ENCODE measurements at regions of chr19 and their contacts with region 1.

Region 1: GRCh38 chr19:38647368-38647965 is at the start of gene ACTN4:
- DNase-seq: peak; percentile 98
- H3K4me3 ChIP-seq: peak within 1 kb of the TSS; percentile 93 to 99
- H3K27ac ChIP-seq: peak within 1 kb of the TSS; percentile 94 to 95
- H3K4me1 ChIP-seq: peaks cover 11% of the 10 kb centered on the region
- H3K27me3 ChIP-seq: no peaks in the 10 kb centered on the region
- CTCF ChIP-seq: peak in 1 of 4 experiments; percentile 30
- POLR2A ChIP-seq: peak; percentile 100
- total RNA-seq, gene ACTN4: 312 to 330 TPM

Region 2: DNA sequence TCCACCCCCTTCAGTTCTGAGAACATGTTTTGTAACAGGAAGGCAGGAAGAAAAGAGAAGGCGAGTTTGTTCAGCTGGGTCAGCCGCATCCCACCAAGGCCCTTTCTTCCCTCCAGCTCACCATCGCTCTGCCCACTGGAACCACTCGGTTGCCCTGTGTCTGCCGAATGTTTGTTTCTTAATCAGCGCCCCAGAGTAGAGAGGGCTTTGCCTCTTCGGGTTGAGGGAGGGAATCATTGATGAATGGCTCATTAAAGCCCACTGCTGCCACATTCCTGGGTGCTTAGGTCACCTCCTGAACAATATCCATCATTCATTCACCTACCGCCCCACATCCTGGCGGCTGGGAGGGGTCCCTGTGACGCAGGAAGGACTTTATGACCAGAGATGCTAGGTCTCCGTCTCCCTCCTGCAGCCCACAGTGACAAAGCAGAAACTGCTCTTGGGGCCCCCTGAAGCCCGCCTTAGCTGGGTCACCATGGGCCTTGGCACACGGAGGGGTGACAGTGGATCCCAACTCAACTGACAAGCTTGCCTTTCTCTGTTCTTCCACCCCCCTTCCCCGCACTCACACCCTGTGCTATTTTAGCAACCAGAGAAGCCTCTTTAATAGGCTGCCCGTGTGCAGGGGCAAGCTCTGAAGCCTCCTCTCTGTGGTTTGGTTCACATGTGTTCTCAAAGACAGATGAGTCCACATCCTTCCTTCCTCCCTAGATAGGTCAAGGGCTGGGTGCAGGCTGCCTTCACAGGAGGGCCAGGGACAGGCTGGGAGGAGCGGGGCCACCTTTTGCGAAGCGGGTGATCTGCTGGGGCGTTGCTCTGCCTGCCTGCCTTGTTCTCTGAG is 46.1 kb after region 1 on chr19:
- intact Hi-C with region 1: loop called (anchors 5 kb)
- DNase-seq: no peak
- H3K4me3 ChIP-seq: no peak overlapping the region
- H3K27ac ChIP-seq: peak overlapping the region; percentile 72 to 74
- H3K4me1 ChIP-seq: no peaks in the 10 kb centered on the region
- H3K27me3 ChIP-seq: no peaks in the 10 kb centered on the region
- CTCF ChIP-seq: no peak
- POLR2A ChIP-seq: no peak

Region 3: GRCh38 chr19:38711726-38712153 is 64.3 kb after region 1 on chr19:
- intact Hi-C with region 1: loop called (anchors 5 kb)
- DNase-seq: peak; percentile 56
- H3K4me3 ChIP-seq: no peak overlapping the region
- H3K27ac ChIP-seq: peak overlapping the region; percentile 74 to 77
- H3K4me1 ChIP-seq: peaks cover 42% of the 10 kb centered on the region
- H3K27me3 ChIP-seq: no peaks in the 10 kb centered on the region
- CTCF ChIP-seq: peak in 1 of 4 experiments; percentile 13
- POLR2A ChIP-seq: no peak

Region 4: GRCh38 chr19:38831142-38831605 is 183.7 kb after region 1 on chr19:
- intact Hi-C with region 1: loop called (anchors 10 kb)
- DNase-seq: peak; percentile 65
- H3K4me3 ChIP-seq: peak overlapping the region; percentile 57 to 58
- H3K27ac ChIP-seq: peak overlapping the region; percentile 88 to 89
- H3K4me1 ChIP-seq: peaks cover 16% of the 10 kb centered on the region
- H3K27me3 ChIP-seq: no peaks in the 10 kb centered on the region
- CTCF ChIP-seq: no peak
- POLR2A ChIP-seq: no peak

Region 5: GRCh38 chr19:38849860-38850435 is 202.5 kb after region 1 on chr19 and contains the start of gene HNRNPL:
- intact Hi-C with region 1: loop called (anchors 5 kb)
- DNase-seq: peak; percentile 100
- H3K4me3 ChIP-seq: peak within 1 kb of the TSS; percentile 97 to 100
- H3K27ac ChIP-seq: peak within 1 kb of the TSS; percentile 100
- H3K4me1 ChIP-seq: peaks cover 14% of the 10 kb centered on the region
- H3K27me3 ChIP-seq: no peaks in the 10 kb centered on the region
- CTCF ChIP-seq: peak; percentile 61 to 96 (median 76)
- POLR2A ChIP-seq: peak; percentile 94
- total RNA-seq, gene HNRNPL: 210 to 231 TPM

Region 6: DNA sequence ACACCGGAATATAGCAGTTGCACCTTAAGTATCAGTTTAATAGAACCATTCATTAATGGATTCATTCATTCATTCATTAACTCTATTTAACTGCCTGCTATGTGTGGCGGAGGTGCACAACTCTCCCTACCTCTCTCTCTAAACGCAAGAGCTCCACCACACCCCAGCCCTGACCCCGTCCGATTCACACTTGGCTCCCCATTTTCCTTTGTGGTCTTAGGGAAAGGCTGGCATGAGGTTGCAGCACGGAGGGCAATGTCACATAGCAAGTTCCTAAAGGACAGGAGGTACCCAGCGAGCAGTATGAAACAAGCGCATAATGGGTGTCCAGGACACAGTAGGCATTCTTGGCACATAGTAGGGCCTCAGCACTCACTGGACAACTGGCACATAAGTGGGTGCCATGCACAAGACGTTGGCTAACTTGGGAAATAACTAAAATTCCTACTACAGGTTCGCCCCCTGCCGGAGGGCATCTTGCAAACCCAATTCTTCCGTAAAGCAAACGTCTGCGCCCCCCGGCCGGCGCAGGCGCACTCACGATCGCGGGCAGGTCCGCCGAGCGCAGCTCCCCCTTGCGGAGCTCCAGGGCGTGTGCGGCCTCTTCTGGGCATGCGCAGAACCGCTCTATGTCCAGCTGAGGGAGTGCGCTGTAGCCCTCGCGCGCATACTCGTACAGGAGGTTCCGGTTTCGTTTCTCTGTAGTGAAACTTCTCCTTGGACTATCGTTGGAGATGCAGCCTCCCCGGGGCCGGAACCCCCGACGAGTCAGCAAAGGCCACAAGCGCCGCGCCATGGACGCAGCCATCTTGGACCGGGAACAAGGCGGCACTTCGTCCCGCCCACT is 282.7 kb after region 1 on chr19 and contains the start of gene SARS2:
- intact Hi-C with region 1: loop called (anchors 5 kb)
- DNase-seq: peak; percentile 85
- H3K4me3 ChIP-seq: peak within 1 kb of the TSS; percentile 60 to 61
- H3K27ac ChIP-seq: peak within 1 kb of the TSS; percentile 91 to 94
- H3K4me1 ChIP-seq: peaks cover 5% of the 10 kb centered on the region
- H3K27me3 ChIP-seq: no peaks in the 10 kb centered on the region
- CTCF ChIP-seq: peak; percentile 99 to 100 (median 100)
- POLR2A ChIP-seq: peak; percentile 16
- total RNA-seq, gene SARS2: 23.3 to 57.5 TPM